Panc1 (cell line): ENCODE measurements at regions of chr2 and their contacts with region 1.

Region 1: DNA sequence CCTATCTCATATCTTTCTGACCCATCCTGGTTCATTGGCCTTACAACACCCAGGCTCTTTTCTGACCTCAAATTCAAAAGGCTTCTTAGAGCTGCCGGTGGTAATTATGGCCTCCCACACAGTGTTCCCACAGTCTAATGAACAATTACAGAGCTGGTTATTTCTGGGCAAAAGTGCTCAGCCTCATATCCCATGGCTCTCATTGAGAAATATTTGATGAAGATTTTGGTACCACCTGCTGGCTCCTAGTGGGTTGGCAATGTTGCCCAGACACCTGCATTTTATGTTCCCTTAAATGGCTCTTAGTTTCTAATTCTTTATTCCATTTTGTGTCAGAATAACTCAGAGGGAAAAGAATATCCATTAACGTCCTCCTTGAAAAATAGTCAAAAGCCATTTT is 20.0 kb upstream of the SCYGR2 start:
- DNase-seq: no peak
- ATAC-seq: no peak
- H3K4me3 ChIP-seq: no peak overlapping the region
- H3K27ac ChIP-seq: no peak overlapping the region
- H3K4me1 ChIP-seq: no peaks in the 10 kb centered on the region
- H3K27me3 ChIP-seq: no peaks in the 10 kb centered on the region; the same call in none of the 2 replicates
- CTCF ChIP-seq: no peak; the same call in 1 of the 2 replicates

Region 2: DNA sequence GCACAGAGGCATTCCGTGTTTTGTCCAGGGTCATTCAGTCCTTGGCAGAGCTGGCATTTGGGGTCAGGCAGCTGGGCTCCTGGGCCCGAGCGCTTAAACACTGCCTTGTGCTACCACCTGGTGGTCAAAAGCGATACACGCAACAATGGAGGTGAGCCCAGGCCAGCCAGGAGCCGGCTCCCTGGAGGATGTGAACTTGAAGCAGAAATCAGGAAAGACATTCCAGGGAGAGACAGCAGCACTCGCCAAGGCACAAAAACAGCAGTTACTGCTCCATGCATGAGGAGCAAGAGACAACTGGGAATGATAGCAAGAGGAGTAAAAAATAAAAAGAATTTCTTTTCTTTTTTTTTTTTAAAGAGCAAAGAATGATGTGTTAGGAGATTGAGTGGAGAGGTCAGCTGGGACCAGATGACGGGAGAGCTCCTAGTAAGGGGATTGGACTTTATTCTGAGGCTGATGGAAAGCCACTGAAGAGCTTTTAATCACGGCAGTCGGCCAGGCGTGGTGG is 187.8 kb after region 1 on chr2:
- CTCF ChIA-PET with region 1: interaction called, 4 read pairs
- POLR2A ChIA-PET with region 1: no interaction called
- in situ Hi-C with region 1: no loop called
- intact Hi-C with region 1: loop called (anchors 10 kb)
- DNase-seq: peak; percentile 53
- ATAC-seq: peak; percentile 99
- H3K4me3 ChIP-seq: no peak overlapping the region
- H3K27ac ChIP-seq: no peak overlapping the region
- H3K4me1 ChIP-seq: no peaks in the 10 kb centered on the region
- H3K27me3 ChIP-seq: no peaks in the 10 kb centered on the region
- CTCF ChIP-seq: peak; percentile 84